ENCODE measurements at regions of chr9 and their contacts with region 1.

Region 1: DNA sequence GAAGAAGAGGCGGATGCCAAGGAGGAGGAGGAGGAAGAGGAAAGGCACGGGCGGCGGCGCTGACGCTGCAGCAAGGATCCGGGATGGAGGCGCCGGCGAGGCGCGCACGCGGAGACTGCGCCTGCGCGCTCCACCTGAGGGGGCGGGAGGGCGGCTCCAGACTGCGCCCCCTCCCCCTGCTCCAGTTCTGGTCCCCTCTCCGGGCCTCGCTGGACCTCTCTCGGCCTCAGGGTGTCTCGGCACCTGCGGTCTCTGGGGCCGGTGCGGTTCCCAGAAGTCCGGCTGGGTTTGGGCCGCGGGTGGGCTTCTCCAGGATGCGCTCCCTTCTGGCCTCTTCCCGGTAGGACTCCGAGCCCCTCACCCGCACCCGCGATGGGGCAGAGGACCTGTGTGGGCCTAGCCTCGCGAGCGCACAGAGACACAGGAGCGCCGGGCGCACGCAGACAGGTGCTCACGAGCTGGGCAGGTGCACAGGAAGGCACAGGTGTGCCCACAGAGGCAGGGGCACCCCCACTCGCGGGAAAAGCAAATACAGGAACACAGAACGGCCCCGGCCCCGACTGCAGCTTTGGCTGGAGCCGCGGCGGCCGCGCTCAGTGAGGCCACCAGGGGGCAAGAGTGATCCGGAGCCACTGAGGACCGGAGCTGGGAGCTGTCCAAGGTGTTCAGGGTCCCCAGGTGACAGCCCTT is at the start of gene NPDC1:
- DNase-seq: peak; percentile 89
- ATAC-seq: peak; percentile 96
- H3K4me3 ChIP-seq: peak within 1 kb of the TSS in 3 of 5 experiments; percentile 18 to 46 (median 23)
- H3K4me3 Mint-ChIP-seq: peak within 1 kb of the TSS; percentile 47
- H3K27ac ChIP-seq: no peak within 1 kb of the TSS
- H3K27ac Mint-ChIP-seq: peak within 1 kb of the TSS; percentile 15
- H3K4me1 ChIP-seq: peaks cover 24 to 42% of the 10 kb centered on the region in 2 donors
- H3K4me1 Mint-ChIP-seq: peaks cover 10% of the 10 kb centered on the region
- H3K27me3 ChIP-seq: peaks cover 0 to 86% (median 53%) of the 10 kb centered on the region in 4 experiments
- H3K27me3 Mint-ChIP-seq: peaks cover 17% of the 10 kb centered on the region
- CTCF ChIP-seq: peak; percentile 87
- total RNA-seq, gene NPDC1: 0.17 and 0.39 TPM in 2 replicates

Region 2: DNA sequence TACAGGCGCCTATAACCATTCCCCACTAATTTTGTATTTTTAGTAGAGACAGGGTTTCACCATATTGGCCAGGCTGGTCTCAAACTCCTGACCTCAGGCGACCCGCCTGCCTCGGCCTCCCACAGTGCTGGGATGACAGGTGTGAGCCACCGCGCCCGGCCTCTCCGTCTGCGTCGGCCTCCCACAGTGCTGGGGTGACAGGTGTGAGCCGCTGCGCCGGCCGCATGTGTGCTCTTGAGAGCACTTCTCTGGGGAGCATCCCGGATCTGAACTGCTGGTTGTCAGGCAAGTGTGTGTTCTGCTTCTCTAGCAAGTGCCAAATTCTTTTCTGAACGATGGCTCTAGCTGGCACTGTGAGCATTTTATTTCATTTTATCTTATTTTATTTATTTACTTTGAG is 11.3 kb after region 1 on chr9:
- CTCF ChIA-PET with region 1: interaction called, 22 read pairs
- POLR2A ChIA-PET with region 1: interaction called, 4 read pairs
- intact Hi-C with region 1: no loop called
- DNase-seq: no peak
- ATAC-seq: no peak
- H3K4me3 ChIP-seq: no peak overlapping the region
- H3K4me3 Mint-ChIP-seq: no peak overlapping the region
- H3K27ac ChIP-seq: no peak overlapping the region
- H3K27ac Mint-ChIP-seq: no peak overlapping the region
- H3K4me1 ChIP-seq: peaks cover 12% of the 10 kb centered on the region in 2 donors
- H3K4me1 Mint-ChIP-seq: peaks cover 4% of the 10 kb centered on the region
- H3K27me3 ChIP-seq: peaks cover 0 to 18% (median 8%) of the 10 kb centered on the region in 4 experiments
- H3K27me3 Mint-ChIP-seq: peaks cover 4% of the 10 kb centered on the region
- CTCF ChIP-seq: no peak

Region 3: GRCh38 chr9:137077010-137077747 is 30.9 kb after region 1 on chr9 and contains the start of gene UAP1L1:
- CTCF ChIA-PET with region 1: interaction called, 10 read pairs
- POLR2A ChIA-PET with region 1: no interaction called
- intact Hi-C with region 1: no loop called
- DNase-seq: peak; percentile 85
- ATAC-seq: peak; percentile 72
- H3K4me3 ChIP-seq: peak within 1 kb of the TSS; percentile 13 to 75 (median 66)
- H3K4me3 Mint-ChIP-seq: peak within 1 kb of the TSS; percentile 81
- H3K27ac ChIP-seq: peak within 1 kb of the TSS; percentile 15 to 82
- H3K27ac Mint-ChIP-seq: peak within 1 kb of the TSS; percentile 82
- H3K4me1 ChIP-seq: peaks cover 11 to 23% of the 10 kb centered on the region in 2 donors
- H3K4me1 Mint-ChIP-seq: peaks cover 19% of the 10 kb centered on the region
- H3K27me3 ChIP-seq: no peaks in the 10 kb centered on the region
- H3K27me3 Mint-ChIP-seq: no peaks in the 10 kb centered on the region
- CTCF ChIP-seq: no peak
- total RNA-seq, gene UAP1L1: 47.6 and 55.8 TPM in 2 replicates

Region 4: DNA sequence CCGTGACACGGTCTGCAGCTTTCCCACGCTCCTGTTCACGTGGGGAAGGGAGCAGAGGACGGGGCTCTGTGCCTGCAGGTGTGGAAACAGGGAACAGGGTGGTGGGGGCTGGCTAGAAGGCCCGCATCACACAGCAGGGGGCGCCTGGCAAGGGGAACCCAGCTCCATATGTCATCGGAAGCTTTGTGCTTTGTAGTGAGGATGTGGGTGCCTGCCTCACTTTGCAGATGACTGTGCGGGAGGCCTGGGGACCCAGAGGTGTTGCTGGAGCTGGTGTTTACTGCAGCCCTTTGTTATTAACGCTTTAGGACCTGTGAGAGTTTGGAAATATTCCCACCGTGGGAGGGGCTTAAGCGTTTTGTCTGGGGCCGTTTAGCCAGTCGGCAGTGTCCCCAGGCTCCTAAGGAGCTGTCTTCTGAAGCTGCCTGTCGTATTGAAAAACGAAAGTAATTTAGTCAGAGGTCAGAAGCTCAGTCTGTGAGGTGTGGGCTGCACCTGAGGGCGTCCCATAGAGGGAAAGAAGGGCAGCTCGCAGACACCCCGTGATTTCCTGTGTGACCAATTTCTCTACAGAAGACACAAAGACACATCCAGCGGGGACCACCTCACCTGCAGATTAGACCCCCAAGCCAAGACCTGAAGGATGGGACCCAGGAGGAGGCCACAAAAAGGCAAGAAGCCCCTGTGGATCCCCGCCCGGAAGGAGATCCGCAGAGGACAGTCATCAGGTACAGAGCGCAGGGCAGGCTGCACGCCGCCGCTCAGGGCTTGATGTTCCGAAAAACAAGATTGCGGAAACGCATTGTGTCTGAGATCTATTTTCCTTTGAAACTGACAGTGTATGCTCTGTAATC is 49.6 kb after region 1 on chr9:
- CTCF ChIA-PET with region 1: interaction called, 11 read pairs
- POLR2A ChIA-PET with region 1: no interaction called
- intact Hi-C with region 1: no loop called
- DNase-seq: peak; percentile 70
- ATAC-seq: peak; percentile 96
- H3K4me3 ChIP-seq: peak overlapping the region in 2 of 5 experiments; percentile 15 to 30
- H3K4me3 Mint-ChIP-seq: peak overlapping the region; percentile 72
- H3K27ac ChIP-seq: peak overlapping the region; percentile 41 to 44
- H3K27ac Mint-ChIP-seq: peak overlapping the region; percentile 72
- H3K4me1 ChIP-seq: peaks cover 0 to 12% of the 10 kb centered on the region in 2 donors
- H3K4me1 Mint-ChIP-seq: peaks cover 6% of the 10 kb centered on the region
- H3K27me3 ChIP-seq: no peaks in the 10 kb centered on the region
- H3K27me3 Mint-ChIP-seq: no peaks in the 10 kb centered on the region
- CTCF ChIP-seq: peak; percentile 49

Region 5: DNA sequence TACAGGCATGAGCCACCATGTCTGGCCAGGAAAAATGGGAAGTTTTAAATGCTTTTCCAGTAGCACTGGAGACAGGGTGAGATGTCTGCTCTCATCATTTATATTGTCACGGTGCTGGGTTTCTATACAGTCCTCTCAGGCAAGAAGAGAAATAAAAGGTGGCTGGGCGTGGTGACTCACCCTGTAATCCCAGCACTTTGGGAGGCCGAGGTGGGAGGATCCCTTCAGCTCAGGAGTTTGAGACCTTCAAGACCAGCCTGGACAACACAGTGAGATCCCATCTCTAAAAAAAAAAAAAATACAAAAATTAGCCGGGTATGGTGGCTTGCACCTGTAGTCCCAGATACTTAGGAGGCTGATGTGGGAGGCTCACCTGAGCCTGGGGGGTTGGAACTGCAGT is 87.9 kb after region 1 on chr9:
- CTCF ChIA-PET with region 1: no interaction called
- POLR2A ChIA-PET with region 1: no interaction called
- intact Hi-C with region 1: no loop called
- DNase-seq: no peak
- ATAC-seq: no peak
- H3K4me3 ChIP-seq: no peak overlapping the region
- H3K4me3 Mint-ChIP-seq: no peak overlapping the region
- H3K27ac ChIP-seq: no peak overlapping the region
- H3K27ac Mint-ChIP-seq: no peak overlapping the region
- H3K4me1 ChIP-seq: peaks cover 16 to 18% of the 10 kb centered on the region in 2 donors
- H3K4me1 Mint-ChIP-seq: peaks cover 4% of the 10 kb centered on the region
- H3K27me3 ChIP-seq: peaks cover 0 to 36% (median 18%) of the 10 kb centered on the region in 4 experiments
- H3K27me3 Mint-ChIP-seq: peaks cover 30% of the 10 kb centered on the region
- CTCF ChIP-seq: no peak